Gastrocnemius medialis (tissue), 4 donors: ENCODE measurements at regions of chrX and their contacts with region 1.

Region 1: DNA sequence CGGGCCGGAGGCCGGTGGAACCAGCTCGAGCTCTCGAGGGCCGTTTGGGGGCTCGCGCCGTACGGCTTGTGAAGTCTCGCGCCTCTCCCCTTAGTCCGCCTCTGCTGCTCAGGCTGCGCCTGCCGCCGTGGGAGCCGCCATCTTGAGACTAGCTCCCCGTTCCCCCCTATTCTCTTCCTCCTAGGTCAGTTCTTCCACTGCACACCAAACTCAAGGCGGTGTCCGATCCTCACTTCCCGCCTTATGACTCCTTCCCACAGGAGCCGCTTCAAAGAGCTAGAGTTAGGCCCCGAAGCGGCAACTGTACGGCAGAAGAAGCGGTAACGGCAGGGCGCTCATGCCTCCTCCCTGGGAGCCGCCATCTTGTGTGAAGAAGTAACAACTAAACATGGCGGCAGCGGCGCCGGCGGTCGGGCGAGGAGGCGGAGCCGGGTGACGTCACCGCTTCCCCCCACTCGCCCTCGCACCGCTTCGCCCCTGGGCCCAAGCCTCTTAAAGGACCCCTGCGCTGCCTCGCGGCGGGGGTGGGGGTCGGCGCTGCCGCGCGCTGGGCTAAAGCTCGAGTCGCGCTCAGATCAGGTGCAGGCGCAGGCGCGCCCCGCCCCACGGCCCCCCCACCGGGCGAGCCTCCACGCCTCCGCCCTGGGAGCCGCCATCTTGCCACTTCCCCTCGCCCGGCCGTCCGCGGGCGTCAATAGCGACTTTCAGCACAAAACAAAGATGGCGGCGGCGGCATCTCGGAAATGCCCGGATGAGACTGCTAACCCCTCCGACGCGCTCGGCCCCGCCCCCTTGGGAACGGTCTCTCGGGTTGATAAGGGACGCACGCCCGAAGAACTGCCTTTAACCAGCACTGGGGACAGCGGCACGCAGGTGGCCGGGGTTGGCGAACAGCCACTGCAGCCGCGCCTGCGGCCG is at the start of gene HCFC1:
- DNase-seq: peak; percentile 81 to 89
- ATAC-seq: peak; percentile 56 to 63
- H3K4me3 ChIP-seq: peak within 1 kb of the TSS; percentile 73 to 94 (median 85)
- H3K27ac ChIP-seq: peak within 1 kb of the TSS; percentile 95 to 100 (median 98)
- H3K4me1 ChIP-seq: peaks cover 35 to 48% of the 10 kb centered on the region in 2 donors
- H3K27me3 ChIP-seq: no peaks in the 10 kb centered on the region
- CTCF ChIP-seq: no peak
- POLR2A ChIP-seq: peak; percentile 20 to 57
- total RNA-seq, gene HCFC1: 15.9 to 56.4 (median 51.8) TPM

Region 2: DNA sequence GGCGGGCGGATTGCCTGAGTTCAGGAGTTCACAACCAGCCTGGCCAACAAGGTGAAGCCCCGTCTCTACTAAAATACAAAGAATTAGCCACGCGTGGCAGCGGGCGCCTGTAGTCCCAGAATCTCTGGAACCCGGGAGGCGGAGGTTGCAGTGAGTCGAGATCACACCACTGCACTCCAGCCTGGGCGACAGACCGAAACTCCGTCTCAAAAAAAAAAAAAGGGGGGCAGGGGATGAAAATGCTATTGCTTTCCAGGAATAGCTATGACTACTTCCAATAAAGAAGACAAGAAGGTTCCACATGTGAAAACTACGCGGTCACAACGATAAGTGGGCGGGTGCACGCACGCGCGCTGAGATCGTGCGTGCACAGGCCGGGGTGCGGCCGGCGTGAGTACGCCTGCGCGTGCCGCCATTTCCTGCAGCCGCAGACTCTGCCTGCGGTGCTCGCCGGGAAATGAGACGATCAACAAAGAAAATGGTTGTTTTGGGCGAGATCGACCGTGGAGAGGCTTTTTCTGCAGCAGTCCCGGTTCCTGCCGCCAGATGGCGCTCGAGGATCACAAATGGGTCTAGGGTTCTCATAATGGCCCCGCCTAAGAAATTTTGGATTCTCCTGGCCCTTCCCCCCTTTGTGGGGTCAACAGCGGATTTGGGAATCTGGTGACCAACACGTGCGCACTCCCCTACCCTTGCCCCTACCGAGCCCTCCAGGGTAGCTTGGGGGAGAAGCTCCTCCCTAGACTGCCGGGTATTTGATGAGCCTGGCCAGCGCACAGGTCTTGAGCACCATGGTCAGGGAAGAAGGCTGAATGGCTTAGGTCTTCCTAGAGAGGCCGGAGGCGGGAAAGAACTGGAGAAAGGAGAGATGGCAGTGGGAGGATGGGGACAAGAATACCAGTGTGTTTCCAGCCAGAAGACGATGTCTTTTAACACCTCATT is 1012.9 kb before region 1 on chrX:
- in situ Hi-C with region 1: loop called in 1 of 4 experiments (anchors 25 kb)
- intact Hi-C with region 1: no loop called
- DNase-seq: peak; percentile 56 to 84
- ATAC-seq: peak; percentile 95 to 97
- H3K4me3 ChIP-seq: peak overlapping the region; percentile 39 to 52 (median 46)
- H3K27ac ChIP-seq: peak overlapping the region; percentile 65 to 81 (median 68)
- H3K4me1 ChIP-seq: peaks cover 0 to 2% of the 10 kb centered on the region in 2 donors
- H3K27me3 ChIP-seq: no peaks in the 10 kb centered on the region
- CTCF ChIP-seq: peak; percentile 83 to 93 (median 89)
- POLR2A ChIP-seq: no peak

Region 3: DNA sequence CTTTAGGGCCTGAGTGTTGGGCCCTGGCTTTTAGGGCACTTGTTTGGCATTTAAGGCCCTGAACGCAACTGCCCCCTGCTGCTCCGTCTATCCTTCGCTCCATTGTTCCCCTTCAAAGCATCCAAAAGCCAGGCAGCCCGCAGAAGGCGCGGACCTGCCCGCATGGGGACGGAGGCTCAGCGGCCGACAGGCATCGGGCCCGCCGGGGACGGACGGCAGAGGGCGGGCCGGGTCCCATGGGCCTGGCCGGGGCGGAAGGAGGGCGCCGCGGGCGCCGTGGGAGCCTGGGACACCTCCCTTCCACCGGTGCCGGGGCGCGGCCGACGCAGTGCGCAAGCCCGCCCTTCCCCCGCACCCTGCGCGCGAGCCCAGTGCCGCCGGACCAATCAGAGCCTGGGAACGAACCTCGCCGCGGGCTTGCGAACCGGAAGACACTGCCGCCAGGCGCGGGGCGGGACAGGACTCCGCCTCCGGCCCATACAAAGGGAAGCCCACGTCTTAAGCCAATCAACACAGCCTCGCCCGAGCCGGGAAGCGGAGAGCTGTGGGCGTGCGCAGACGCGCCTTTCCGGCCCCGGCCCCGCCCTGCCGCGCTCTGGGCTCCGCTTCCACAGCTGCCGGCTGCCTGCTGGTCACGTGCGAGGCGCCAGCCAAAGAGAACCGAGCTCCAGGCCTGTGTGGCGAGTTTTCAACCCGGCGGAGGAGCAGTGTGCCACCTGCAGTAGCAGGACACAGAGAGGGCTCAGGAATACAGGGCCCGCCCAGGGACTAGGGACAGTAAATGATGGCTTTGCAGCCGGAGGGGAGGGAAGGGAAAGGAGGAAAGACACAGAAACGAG is 43.6 kb before region 1 on chrX:
- in situ Hi-C with region 1: no loop called
- intact Hi-C with region 1: loop called (anchors 1 kb)
- DNase-seq: peak; percentile 91 to 96
- ATAC-seq: peak; percentile 89
- H3K4me3 ChIP-seq: peak overlapping the region; percentile 55 to 74 (median 68)
- H3K27ac ChIP-seq: peak overlapping the region; percentile 85 to 97 (median 90)
- H3K4me1 ChIP-seq: peaks cover 10 to 17% of the 10 kb centered on the region in 2 donors
- H3K27me3 ChIP-seq: no peaks in the 10 kb centered on the region
- CTCF ChIP-seq: peak in 4 of 5 experiments; percentile 24 to 27 (median 25)
- POLR2A ChIP-seq: peak; percentile 88 to 92

Region 4: DNA sequence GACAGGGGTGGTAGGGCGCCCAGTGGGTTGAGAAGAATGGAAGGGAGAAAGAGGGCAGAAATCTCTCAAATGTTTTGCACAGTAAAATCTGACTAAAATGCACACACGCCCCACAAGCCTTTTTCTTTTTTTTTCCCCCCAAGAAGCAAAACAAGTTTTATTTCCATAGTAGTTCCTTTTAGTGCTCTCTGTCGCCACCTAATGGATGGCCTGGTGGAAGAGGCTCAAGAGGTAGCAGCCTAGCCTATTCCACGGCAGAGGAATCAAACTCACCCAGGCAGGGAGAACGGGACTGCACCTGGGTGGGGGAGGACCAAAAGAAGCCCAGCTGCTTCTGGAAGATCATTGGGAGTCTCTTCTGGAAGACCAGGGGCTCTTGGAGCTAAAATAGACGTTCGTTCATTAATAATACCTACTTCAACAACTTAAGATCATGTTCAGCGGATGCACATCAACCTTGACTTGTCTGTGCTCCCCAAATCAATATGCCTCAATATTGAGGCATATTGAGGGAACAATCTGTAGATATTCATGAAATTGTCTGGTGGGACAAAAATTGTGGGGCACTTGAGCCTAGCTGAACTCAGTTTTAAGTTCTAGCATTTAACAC is 79.6 kb after region 1 on chrX:
- in situ Hi-C with region 1: loop called in 1 of 4 experiments (anchors 25 kb)
- intact Hi-C with region 1: loop called (anchors 2 kb)
- DNase-seq: peak; percentile 29 to 66
- ATAC-seq: peak; percentile 34 to 39
- H3K4me3 ChIP-seq: peak overlapping the region in 1 of 4 donors; percentile 36
- H3K27ac ChIP-seq: peak overlapping the region; percentile 82 to 89 (median 88)
- H3K4me1 ChIP-seq: peaks cover 39 to 49% of the 10 kb centered on the region in 2 donors
- H3K27me3 ChIP-seq: no peaks in the 10 kb centered on the region
- CTCF ChIP-seq: peak in 4 of 5 experiments; percentile 61 to 80 (median 63)
- POLR2A ChIP-seq: no peak

Region 5: DNA sequence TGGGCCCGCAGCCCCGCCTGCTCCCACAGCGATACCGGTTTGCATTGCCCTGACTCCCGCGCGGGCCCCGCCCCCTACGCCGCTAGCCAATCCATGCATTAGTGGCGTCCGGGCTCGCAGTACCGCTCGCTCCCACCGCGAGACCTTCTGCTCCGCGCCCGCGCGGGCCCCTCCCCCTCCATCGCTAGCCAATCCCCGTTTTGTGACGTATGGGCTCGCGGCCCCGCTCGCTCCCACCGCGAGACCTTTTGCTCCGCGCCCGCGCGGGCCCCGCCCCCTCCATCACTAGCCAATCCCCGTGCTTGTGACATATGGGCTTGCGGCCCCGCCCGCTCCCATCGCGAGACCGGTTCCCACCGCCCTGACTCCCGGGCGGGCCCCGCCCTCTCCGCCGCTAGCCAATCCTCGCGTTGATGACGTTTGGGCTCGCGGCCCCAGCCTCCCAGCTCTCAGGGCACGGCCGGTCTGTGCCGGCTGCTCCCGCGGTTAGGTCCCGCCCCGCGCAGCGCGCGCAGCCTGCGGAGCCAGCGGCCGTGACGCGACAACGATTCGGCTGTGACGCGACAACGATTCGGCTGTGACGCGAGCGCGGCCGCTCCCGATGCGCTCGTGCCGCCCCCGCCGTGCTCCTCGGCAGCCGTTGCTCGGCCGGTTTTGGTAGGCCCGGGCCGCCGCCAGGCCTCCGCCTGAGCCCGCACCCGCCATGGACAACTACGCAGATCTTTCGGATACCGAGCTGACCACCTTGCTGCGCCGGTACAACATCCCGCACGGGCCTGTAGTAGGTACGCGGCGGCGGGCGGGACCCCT is 407.3 kb after region 1 on chrX and contains the start of gene EMD:
- in situ Hi-C with region 1: no loop called
- intact Hi-C with region 1: loop called (anchors 10 kb)
- DNase-seq: peak; percentile 95 to 98
- ATAC-seq: peak; percentile 79 to 84
- H3K4me3 ChIP-seq: peak within 1 kb of the TSS; percentile 67 to 84 (median 69)
- H3K27ac ChIP-seq: peak within 1 kb of the TSS; percentile 87 to 99 (median 96)
- H3K4me1 ChIP-seq: peaks cover 5 to 13% of the 10 kb centered on the region in 2 donors
- H3K27me3 ChIP-seq: no peaks in the 10 kb centered on the region
- CTCF ChIP-seq: peak in 1 of 5 experiments; percentile 5
- POLR2A ChIP-seq: peak; percentile 89 to 93
- total RNA-seq, gene EMD: 36.2 to 61.5 (median 53.2) TPM